Endothelial cell of umbilical vein (primary cell): ENCODE measurements at regions of chr6 and their contacts with region 1.

Region 1: DNA sequence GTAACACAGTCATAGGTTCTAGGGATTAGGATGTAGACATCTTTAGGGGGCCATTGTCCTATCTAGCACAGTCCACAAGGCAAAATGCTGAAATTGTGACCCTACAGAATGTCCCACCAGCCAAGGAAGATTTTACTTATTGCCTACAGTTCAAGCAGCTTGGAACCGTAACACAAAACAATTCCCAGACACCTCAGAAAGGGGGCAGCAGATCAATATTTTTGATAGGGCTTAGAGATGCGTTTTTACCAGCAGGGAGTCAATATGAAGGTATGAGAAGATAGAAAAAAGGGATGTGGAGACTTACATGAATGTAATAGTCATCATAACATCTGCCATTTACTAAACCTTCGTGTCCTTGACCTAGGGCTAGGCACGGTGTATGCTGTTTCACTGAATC is 81.0 kb downstream of the TMEM170B start:
- DNase-seq: peak; percentile 65
- H3K4me3 ChIP-seq: no peak overlapping the region
- H3K27ac ChIP-seq: peak overlapping the region; percentile 30
- H3K4me1 ChIP-seq: peaks cover 34% of the 10 kb centered on the region
- H3K27me3 ChIP-seq: no peaks in the 10 kb centered on the region
- CTCF ChIP-seq: peak; percentile 14 to 26
- POLR2A ChIP-seq: no peak

Region 2: DNA sequence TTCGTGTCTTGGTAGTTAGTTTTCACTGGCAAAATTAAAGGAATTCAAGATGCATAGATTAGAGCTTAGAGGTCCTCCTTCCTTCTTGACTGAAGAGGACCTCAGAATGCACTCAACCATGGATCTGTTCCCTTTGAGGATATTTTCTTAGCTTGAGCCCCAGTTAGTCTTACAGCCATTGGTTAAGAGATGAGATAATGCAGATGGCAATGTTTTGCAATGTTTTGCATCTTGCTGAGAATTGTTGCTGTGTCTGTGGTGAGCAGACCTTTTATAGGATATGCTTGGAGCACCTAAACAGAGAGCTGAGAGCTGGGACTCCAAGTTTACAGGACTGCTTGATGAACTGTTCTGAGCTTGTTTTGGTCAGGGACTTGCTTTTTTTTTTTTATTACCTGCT is 26.5 kb after region 1 on chr6:
- CTCF ChIA-PET with region 1: interaction called, 102 read pairs
- POLR2A ChIA-PET with region 1: interaction called, 210 read pairs
- dilution Hi-C with region 1: no loop called
- intact Hi-C with region 1: loop called (anchors 1 kb)
- DNase-seq: no peak
- H3K4me3 ChIP-seq: no peak overlapping the region
- H3K27ac ChIP-seq: no peak overlapping the region
- H3K4me1 ChIP-seq: peaks cover 13% of the 10 kb centered on the region
- H3K27me3 ChIP-seq: no peaks in the 10 kb centered on the region
- CTCF ChIP-seq: no peak
- POLR2A ChIP-seq: no peak